Activated T-helper 1 cell treated with anti-CD3 and anti-CD28 coated beads, Interleukin-12 subunit alpha, Interleukin-12 subunit beta, Interleukin-2, Interleukin-4 antibody, amounts not matched to agents 30 ng/mL and 10 ng/mL and 1 ng/mL, durations not matched to agents 14 hours and 24 hours and 36 hours (primary cell): ENCODE measurements at regions of chr21 and their contacts with region 1.

Region 1: DNA sequence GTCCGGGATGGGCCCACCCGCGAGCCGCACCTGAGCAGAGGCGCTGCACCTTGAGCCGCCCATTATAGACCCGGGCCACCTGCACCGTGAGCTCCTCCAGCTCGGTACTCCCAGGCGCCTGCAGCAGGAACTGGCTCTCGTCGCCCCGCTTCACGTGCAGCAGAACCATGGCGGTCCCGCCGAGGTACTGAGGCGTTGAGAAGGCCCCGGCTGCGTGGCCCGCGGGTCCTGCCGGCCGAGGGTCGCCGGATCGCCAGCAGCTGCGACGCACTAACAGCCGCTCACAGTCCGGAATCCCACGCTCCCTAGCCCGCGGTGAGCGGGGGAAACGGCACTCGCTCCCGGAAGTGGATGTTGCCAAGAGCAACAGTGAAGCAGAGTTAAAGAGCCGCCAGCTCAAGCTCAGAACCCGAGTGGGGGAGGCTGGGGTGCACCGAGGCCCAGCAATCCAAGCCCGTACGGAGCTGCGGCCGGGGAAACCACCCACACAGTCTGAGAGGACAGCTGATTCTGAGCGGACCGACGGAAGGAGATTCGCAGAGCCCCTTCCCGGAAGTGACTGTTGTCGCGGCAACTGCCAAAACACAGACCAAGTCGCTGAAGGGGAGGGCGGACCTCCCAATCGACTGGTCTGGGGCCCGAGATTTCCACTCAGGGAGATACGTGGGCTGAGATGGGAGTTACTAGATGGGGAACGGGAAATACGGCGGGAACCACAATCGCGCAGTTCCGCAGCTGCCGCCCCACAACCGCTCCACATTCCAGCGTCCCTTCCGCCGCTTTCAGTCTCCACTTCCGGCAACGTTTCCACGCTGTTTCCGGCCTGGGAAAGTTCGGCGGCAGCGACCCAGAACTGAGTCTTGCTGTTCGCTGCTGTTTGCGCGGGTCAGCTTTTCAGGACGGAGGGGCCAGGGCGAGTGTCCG is at the start of gene CFAP298:
- DNase-seq: peak; percentile 84
- H3K4me3 Mint-ChIP-seq: peak within 1 kb of the TSS; percentile 96
- H3K27ac Mint-ChIP-seq: peak within 1 kb of the TSS; percentile 93
- H3K4me1 Mint-ChIP-seq: peaks cover 8% of the 10 kb centered on the region
- H3K27me3 Mint-ChIP-seq: peaks cover 4% of the 10 kb centered on the region
- total RNA-seq, gene CFAP298: 52.9 and 54.6 TPM in 2 replicates

Region 2: DNA sequence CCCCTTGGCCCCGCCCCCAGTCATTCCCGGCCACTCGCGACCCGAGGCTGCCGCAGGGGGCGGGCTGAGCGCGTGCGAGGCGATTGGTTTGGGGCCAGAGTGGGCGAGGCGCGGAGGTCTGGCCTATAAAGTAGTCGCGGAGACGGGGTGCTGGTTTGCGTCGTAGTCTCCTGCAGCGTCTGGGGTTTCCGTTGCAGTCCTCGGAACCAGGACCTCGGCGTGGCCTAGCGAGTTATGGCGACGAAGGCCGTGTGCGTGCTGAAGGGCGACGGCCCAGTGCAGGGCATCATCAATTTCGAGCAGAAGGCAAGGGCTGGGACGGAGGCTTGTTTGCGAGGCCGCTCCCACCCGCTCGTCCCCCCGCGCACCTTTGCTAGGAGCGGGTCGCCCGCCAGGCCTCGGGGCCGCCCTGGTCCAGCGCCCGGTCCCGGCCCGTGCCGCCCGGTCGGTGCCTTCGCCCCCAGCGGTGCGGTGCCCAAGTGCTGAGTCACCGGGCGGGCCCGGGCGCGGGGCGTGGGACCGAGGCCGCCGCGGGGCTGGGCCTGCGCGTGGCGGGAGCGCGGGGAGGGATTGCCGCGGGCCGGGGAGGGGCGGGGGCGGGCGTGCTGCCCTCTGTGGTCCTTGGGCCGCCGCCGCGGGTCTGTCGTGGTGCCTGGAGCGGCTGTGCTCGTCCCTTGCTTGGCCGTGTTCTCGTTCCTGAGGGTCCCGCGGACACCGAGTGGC is 952.6 kb before region 1 on chr21 and contains the start of gene SOD1:
- intact Hi-C with region 1: loop called (anchors 2 kb)
- DNase-seq: peak; percentile 96
- H3K4me3 Mint-ChIP-seq: peak within 1 kb of the TSS; percentile 99
- H3K27ac Mint-ChIP-seq: peak within 1 kb of the TSS; percentile 100
- H3K4me1 Mint-ChIP-seq: peaks cover 76% of the 10 kb centered on the region
- H3K27me3 Mint-ChIP-seq: no peaks in the 10 kb centered on the region
- total RNA-seq, gene SOD1: 346 and 354 TPM in 2 replicates

Region 3: GRCh38 chr21:31731802-31732596 is 880.3 kb before region 1 on chr21 and contains the start of gene SCAF4:
- intact Hi-C with region 1: loop called (anchors 5 kb)
- DNase-seq: peak; percentile 78
- H3K4me3 Mint-ChIP-seq: no peak within 1 kb of the TSS
- H3K27ac Mint-ChIP-seq: peak within 1 kb of the TSS; percentile 79
- H3K4me1 Mint-ChIP-seq: no peaks in the 10 kb centered on the region
- H3K27me3 Mint-ChIP-seq: no peaks in the 10 kb centered on the region
- total RNA-seq, gene SCAF4: 66.1 and 70.6 TPM in 2 replicates

Region 4: DNA sequence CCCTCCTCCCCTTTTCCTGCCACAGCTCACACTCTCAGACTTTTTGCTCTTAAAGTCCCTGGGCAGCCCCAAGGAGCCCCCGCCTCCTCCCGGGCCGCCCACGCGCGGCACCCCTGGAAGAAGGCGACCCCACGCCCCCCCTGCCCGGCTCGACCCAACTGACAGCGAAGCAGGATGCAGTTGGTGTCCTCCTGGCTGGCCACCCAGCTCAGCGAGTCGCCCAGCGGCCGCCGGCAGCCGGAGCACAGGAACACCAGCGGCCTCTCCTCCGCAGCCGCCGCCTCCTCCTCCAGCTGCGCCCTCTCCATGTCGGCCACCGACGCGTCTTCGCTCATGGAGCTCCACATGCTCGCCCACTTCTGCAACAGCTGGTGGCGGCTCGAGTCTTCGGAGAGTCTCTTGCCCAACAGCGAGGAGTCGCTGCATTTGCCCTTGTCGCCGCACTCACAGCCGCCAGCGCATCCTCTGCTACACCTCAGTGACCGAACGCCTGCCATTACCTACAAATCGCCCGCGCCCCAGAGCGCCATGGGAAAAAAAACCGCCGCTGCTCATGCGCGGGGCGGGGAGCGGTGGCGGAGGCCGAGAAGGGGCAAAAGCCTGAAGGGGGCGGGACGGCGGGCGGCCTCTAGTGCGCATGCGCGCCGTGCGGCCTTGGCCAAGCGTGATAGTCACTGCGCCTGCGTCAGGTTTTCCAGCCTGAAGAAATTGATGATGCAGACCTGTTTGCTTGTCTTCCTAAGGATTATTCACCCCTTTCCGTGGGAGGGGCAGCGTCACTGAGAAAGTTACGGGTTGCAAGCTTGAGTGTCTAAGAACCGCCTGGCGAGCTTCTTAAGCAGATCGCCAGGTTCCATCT is 333.6 kb before region 1 on chr21 and contains the start of gene MIS18A:
- intact Hi-C with region 1: loop called (anchors 2 kb)
- DNase-seq: peak; percentile 95
- H3K4me3 Mint-ChIP-seq: peak within 1 kb of the TSS; percentile 100
- H3K27ac Mint-ChIP-seq: peak within 1 kb of the TSS; percentile 97
- H3K4me1 Mint-ChIP-seq: peaks cover 21% of the 10 kb centered on the region
- H3K27me3 Mint-ChIP-seq: no peaks in the 10 kb centered on the region
- total RNA-seq, gene MIS18A: 26.8 and 27.5 TPM in 2 replicates

Region 5: GRCh38 chr21:32392880-32393676 is 219.3 kb before region 1 on chr21 and contains the start of gene URB1:
- intact Hi-C with region 1: loop called (anchors 1 kb)
- DNase-seq: peak; percentile 89
- H3K4me3 Mint-ChIP-seq: peak within 1 kb of the TSS; percentile 91
- H3K27ac Mint-ChIP-seq: peak within 1 kb of the TSS; percentile 88
- H3K4me1 Mint-ChIP-seq: peaks cover 48% of the 10 kb centered on the region
- H3K27me3 Mint-ChIP-seq: peaks cover 3% of the 10 kb centered on the region
- total RNA-seq, gene URB1: 42.1 and 42.8 TPM in 2 replicates

Region 6: GRCh38 chr21:32412162-32413014 is 199.9 kb before region 1 on chr21 and contains the start of gene EVA1C:
- intact Hi-C with region 1: loop called (anchors 1 kb)
- DNase-seq: peak; percentile 39
- H3K4me3 Mint-ChIP-seq: peak within 1 kb of the TSS; percentile 94
- H3K27ac Mint-ChIP-seq: peak within 1 kb of the TSS; percentile 87
- H3K4me1 Mint-ChIP-seq: peaks cover 33% of the 10 kb centered on the region
- H3K27me3 Mint-ChIP-seq: peaks cover 12% of the 10 kb centered on the region
- total RNA-seq, gene EVA1C: 6.2 and 7.6 TPM in 2 replicates

Region 7: DNA sequence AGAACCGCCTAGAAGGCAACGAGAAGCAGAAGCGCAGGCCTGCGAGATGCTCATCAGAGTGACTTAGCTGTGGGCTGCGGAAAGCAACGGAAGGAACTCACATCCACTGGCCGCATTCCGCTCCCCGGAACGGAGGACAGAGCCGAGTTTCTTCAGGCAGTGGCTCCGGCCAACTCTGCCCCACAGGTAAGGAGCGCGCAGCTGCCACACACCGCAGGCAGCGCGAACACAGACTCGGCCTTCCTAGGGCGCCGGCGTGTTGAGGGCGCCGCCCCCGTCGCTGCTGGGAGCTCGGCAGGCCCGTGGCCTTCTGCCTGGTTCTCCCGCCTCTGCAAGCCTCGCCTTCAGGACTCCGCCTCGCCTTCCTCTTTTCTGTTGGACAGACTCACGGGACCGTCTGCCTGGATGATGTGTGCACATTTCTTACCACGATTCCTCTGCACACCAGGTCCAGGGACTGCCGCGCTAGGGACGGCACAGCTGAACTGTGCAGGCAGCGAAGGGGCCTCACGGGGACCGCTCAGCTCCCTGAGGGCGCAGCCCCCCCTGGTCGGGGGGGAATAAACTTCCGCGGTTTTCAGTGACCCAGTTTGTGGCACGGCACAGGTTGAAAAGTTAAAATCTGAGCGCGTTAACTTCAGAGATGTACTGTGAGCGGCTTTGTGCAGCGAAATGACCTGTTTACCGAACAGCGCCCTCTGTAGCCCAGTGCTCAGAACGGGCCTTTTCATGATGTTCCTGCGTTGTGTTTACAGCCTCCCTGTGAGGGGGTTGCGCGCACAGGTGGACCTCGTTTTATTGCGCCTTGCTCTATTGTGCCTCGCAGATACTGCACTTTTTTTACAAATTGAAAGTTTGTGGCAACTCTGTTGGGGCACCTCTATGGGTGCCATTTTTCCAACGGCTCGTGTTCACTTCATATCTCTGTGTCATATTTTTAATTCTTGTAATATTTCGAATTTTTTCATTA is 42.8 kb before region 1 on chr21:
- intact Hi-C with region 1: loop called (anchors 5 kb)
- DNase-seq: peak; percentile 67
- H3K4me3 Mint-ChIP-seq: peak overlapping the region; percentile 88
- H3K27ac Mint-ChIP-seq: peak overlapping the region; percentile 57
- H3K4me1 Mint-ChIP-seq: peaks cover 21% of the 10 kb centered on the region
- H3K27me3 Mint-ChIP-seq: peaks cover 12% of the 10 kb centered on the region